ENCODE measurements at regions of chr10 and their contacts with region 1.

Region 1: GRCh38 chr10:30701451-30702173 is 72.1 kb upstream of the LYZL2 start:
- DNase-seq: peak; percentile 93
- H3K4me3 Mint-ChIP-seq: peak overlapping the region; percentile 50
- H3K27ac Mint-ChIP-seq: peak overlapping the region; percentile 88
- H3K4me1 Mint-ChIP-seq: peaks cover 85% of the 10 kb centered on the region
- H3K27me3 Mint-ChIP-seq: no peaks in the 10 kb centered on the region

Region 2: GRCh38 chr10:30529373-30529998 is 172.1 kb before region 1 on chr10:
- CTCF ChIA-PET with region 1: no interaction called
- intact Hi-C with region 1: loop called (anchors 2 kb)
- DNase-seq: peak; percentile 88
- H3K4me3 Mint-ChIP-seq: peak overlapping the region; percentile 73
- H3K27ac Mint-ChIP-seq: peak overlapping the region; percentile 85
- H3K4me1 Mint-ChIP-seq: peaks cover 52% of the 10 kb centered on the region
- H3K27me3 Mint-ChIP-seq: no peaks in the 10 kb centered on the region

Region 3: GRCh38 chr10:30573721-30574431 is 127.7 kb before region 1 on chr10:
- CTCF ChIA-PET with region 1: no interaction called
- intact Hi-C with region 1: no loop called
- DNase-seq: no peak
- H3K4me3 Mint-ChIP-seq: no peak overlapping the region
- H3K27ac Mint-ChIP-seq: no peak overlapping the region
- H3K4me1 Mint-ChIP-seq: no peaks in the 10 kb centered on the region
- H3K27me3 Mint-ChIP-seq: no peaks in the 10 kb centered on the region

Region 4: DNA sequence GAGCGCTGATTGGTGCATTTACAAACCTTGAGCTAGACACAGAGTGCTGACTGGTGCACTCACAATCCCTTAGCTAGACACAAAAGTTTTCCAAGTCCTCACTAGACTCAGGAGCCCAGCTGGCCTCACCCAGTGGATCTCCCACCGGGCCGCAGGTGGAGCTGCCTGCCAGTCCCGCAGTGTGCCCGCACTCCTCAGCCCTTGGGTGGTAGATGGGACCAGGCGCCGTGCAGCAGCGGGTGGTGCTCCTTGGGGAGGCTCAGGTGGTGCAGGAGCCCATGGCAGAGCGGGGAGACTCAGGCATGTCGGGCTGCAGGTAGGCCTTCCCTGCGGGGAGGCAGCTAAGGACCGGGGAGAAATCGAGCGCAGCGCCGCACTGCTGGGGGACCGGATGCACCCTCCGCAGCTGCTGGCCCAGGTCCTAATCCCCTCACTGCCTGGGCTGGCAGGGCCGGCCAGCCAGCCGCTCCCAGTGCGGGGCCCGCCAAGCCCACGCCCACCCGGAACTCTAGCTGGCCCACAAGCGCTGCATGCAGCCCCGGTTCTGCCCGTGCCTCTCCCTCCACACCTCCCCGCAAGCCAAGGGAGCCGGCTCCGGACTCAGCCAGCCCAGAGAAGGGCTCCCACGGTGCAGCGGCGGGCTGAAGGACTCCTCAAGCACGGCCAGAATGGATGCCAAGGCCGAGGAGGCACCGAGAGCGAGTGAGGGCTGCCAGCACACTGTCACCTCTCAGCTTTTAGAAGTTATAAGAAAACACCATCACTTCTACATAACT is 201.2 kb after region 1 on chr10:
- CTCF ChIA-PET with region 1: no interaction called
- intact Hi-C with region 1: no loop called
- DNase-seq: no peak
- H3K4me3 Mint-ChIP-seq: no peak overlapping the region
- H3K27ac Mint-ChIP-seq: no peak overlapping the region
- H3K4me1 Mint-ChIP-seq: no peaks in the 10 kb centered on the region
- H3K27me3 Mint-ChIP-seq: no peaks in the 10 kb centered on the region

Region 5: GRCh38 chr10:31031558-31032257 is 330.1 kb after region 1 on chr10 and contains the start of gene ZNF438:
- CTCF ChIA-PET with region 1: no interaction called
- intact Hi-C with region 1: loop called (anchors 1 kb)
- DNase-seq: peak; percentile 93
- H3K4me3 Mint-ChIP-seq: peak within 1 kb of the TSS; percentile 86
- H3K27ac Mint-ChIP-seq: peak within 1 kb of the TSS; percentile 98
- H3K4me1 Mint-ChIP-seq: peaks cover 16% of the 10 kb centered on the region
- H3K27me3 Mint-ChIP-seq: no peaks in the 10 kb centered on the region
- total RNA-seq, gene ZNF438: 2.4 to 2.6 TPM

Region 6: GRCh38 chr10:31426401-31426800 is 724.8 kb after region 1 on chr10:
- CTCF ChIA-PET with region 1: no interaction called
- intact Hi-C with region 1: loop called (anchors 2 kb)
- DNase-seq: no peak
- H3K4me3 Mint-ChIP-seq: no peak overlapping the region
- H3K27ac Mint-ChIP-seq: no peak overlapping the region
- H3K4me1 Mint-ChIP-seq: peaks cover 54% of the 10 kb centered on the region
- H3K27me3 Mint-ChIP-seq: no peaks in the 10 kb centered on the region

Region 7: DNA sequence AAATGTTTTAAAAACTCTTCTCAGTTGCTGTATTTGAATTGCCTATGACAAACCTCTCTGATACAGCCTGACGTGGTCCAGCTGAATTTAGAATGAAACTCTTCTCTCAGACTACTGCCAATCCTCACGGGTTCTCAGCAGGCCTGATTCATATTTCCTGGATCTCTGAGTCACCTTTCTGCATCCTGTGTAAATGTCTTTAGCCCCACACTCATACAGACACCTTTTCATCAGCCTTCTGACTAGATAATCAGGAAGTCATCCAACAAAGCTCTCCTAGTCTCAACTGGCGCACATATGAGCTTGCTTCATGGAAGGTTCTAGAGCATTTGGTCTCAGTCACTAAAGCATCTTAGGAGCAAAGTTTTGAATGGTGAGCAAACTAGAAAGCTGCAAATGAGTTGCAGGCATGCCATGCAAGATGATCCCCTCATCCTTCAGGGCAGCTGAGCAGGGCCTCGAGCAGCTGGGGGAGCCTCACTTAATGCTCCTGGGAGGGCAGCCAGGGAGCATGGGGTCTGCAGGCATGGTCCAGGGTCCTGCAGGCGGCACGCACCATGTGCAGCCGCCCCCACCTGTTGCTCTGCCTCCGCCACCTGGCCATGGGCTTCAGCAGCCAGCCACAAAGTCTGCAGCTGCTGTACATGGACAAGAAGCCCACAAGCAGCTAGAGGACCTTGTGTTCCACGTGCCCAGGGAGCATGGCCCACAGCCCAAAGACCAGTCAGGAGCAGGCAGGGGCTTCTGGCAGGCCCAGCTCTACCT is 1044.2 kb after region 1 on chr10:
- CTCF ChIA-PET with region 1: interaction called, 3 read pairs
- intact Hi-C with region 1: loop called (anchors 1 kb)
- DNase-seq: peak; percentile 84
- H3K4me3 Mint-ChIP-seq: no peak overlapping the region
- H3K27ac Mint-ChIP-seq: peak overlapping the region; percentile 95
- H3K4me1 Mint-ChIP-seq: peaks cover 47% of the 10 kb centered on the region
- H3K27me3 Mint-ChIP-seq: no peaks in the 10 kb centered on the region

Region 8: GRCh38 chr10:32332299-32332750 is 1630.7 kb after region 1 on chr10:
- CTCF ChIA-PET with region 1: no interaction called
- intact Hi-C with region 1: loop called (anchors 5 kb)
- DNase-seq: peak; percentile 89
- H3K4me3 Mint-ChIP-seq: peak overlapping the region; percentile 55
- H3K27ac Mint-ChIP-seq: peak overlapping the region; percentile 90
- H3K4me1 Mint-ChIP-seq: peaks cover 94% of the 10 kb centered on the region
- H3K27me3 Mint-ChIP-seq: no peaks in the 10 kb centered on the region

Measured in activated naive CD4-positive, alpha-beta T cell treated with anti-CD3 and anti-CD28 coated beads for 36 hours (primary cell).